Vagina (tissue), 2 donors: ENCODE measurements at regions of chr2 and their contacts with region 1.

Region 1: DNA sequence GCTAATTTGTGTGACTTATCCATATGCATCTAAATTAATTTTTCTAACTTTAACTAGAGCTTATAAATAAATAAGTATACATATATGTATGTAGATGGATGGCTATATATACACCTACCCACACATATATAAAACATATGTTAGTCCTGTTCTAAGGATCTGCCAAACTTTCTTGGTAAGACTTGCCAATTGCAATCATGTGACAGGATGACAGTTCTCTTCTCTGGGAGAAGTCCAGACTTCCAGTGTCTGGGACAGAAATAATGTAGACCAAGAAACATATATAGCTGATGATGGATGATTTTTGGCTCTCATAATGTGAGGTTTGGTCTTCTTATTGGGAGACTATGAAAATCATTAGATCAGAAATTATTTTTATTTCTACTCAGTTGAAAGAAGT is 30.6 kb upstream of the NR4A2 start:
- DNase-seq: no peak
- H3K4me3 ChIP-seq: no peak overlapping the region
- H3K27ac ChIP-seq: no peak overlapping the region
- H3K4me1 ChIP-seq: no peaks in the 10 kb centered on the region
- H3K27me3 ChIP-seq: no peaks in the 10 kb centered on the region
- CTCF ChIP-seq: no peak
- POLR2A ChIP-seq: no peak

Region 2: DNA sequence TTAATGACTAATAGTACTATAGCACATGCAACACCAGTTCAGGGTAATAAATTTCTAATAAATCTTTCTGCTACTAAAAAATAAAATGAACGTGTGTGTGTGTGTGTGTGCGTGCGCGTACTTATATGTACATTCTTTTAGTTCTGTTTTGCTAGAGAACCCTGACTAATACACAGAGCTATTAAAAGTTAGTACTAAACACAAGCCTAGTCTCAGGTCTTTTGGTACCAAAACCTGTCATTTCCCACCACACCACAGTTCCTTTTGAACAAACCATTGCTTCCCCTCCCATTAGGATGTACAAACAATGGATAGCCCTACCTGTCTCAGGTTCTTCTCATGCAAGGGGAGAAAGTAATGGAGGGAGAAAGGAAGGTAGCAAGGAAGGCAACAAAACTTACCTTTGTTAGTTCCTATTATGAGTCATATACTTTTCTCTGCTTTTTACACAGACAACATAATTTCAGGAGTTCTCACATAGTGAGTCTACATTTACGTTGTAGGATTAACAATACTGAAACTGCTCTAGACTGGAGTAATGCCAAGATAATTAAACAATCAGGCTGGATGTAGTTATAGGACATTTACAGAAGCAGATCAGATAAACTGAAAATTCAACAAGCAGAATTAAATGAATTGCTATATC is 1237.4 kb before region 1 on chr2:
- intact Hi-C with region 1: loop called (anchors 5 kb)
- DNase-seq: no peak
- H3K4me3 ChIP-seq: no peak overlapping the region
- H3K27ac ChIP-seq: no peak overlapping the region
- H3K4me1 ChIP-seq: no peaks in the 10 kb centered on the region
- H3K27me3 ChIP-seq: no peaks in the 10 kb centered on the region
- CTCF ChIP-seq: no peak
- POLR2A ChIP-seq: no peak